AG04450 (cell line): ENCODE measurements at regions of chr9 and their contacts with region 1.

Region 1: DNA sequence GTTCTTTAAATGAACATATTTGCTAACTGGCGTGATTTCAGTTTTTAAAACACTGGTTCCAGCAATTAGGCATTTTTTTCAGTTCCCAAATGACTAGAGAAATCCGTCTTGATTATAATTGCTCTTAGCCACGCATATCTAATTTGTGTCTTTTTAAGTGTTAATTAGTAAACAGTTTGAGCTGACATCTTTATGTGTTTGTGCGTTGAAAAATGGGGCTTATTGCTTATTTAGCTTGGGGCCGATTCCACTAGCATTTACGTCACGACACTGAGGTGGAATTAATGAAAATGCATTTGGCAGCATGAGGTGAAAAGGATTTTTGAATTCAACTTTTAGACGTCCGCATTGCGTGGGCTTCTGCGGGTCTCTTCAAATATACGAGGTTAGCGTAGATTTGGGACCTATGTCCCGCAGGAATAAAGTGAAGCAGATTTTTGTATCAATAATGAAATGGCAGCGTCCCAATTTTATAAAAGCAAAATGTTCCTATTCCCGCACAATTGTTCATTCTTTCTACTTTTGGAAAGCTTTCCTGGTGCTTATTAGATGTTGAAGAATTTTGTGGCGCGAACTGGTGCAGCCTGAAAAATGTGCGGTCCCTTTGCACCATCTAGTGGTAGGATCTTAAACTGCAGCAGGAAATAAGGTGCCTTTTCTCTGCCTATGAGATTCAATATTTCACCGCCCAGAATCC is 122.7 kb upstream of the LMX1B start:
- DNase-seq: peak; percentile 33
- H3K4me3 ChIP-seq: no peak overlapping the region
- H3K27ac ChIP-seq: no peak overlapping the region
- H3K27me3 ChIP-seq: no peaks in the 10 kb centered on the region
- CTCF ChIP-seq: peak; percentile 96

Region 2: GRCh38 chr9:126301985-126302603 is 188.9 kb before region 1 on chr9:
- CTCF ChIA-PET with region 1: interaction called, 40 read pairs
- POLR2A ChIA-PET with region 1: no interaction called
- DNase-seq: peak; percentile 37
- H3K4me3 ChIP-seq: no peak overlapping the region
- H3K27ac ChIP-seq: no peak overlapping the region
- H3K27me3 ChIP-seq: peaks cover 27% of the 10 kb centered on the region
- CTCF ChIP-seq: peak; percentile 92

Region 3: GRCh38 chr9:126317513-126317912 is 173.5 kb before region 1 on chr9:
- CTCF ChIA-PET with region 1: interaction called, 33 read pairs
- POLR2A ChIA-PET with region 1: no interaction called
- DNase-seq: no peak
- H3K4me3 ChIP-seq: no peak overlapping the region
- H3K27ac ChIP-seq: no peak overlapping the region
- H3K27me3 ChIP-seq: peaks cover 4% of the 10 kb centered on the region
- CTCF ChIP-seq: peak; percentile 32; the same call in 1 of the 2 replicates

Region 4: GRCh38 chr9:126471084-126471624 is 19.9 kb before region 1 on chr9:
- CTCF ChIA-PET with region 1: interaction called, 18 read pairs
- POLR2A ChIA-PET with region 1: no interaction called
- DNase-seq: no peak
- H3K4me3 ChIP-seq: no peak overlapping the region
- H3K27ac ChIP-seq: no peak overlapping the region
- H3K27me3 ChIP-seq: no peaks in the 10 kb centered on the region
- CTCF ChIP-seq: no peak

Region 5: DNA sequence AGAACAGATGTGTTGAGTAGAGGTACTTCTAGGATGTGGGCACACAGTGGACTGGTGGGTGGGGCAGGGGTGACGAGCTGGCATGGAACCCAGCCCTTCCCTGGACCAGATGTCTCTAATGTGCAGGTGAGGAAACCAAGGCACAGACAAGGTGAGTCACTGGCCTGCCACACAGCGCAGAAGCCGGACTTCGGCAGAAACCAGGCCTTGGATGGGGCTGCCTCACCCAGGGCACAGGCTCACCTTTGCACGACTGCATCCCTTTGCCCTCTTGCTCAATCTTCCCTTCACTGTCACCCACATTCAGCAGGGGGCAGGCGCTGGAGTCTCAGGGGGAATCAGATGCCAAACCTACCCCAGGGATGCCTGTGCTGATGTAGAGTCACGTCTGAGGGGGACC is 57.3 kb after region 1 on chr9:
- CTCF ChIA-PET with region 1: no interaction called
- POLR2A ChIA-PET with region 1: no interaction called
- DNase-seq: no peak
- H3K4me3 ChIP-seq: no peak overlapping the region
- H3K27ac ChIP-seq: no peak overlapping the region
- H3K27me3 ChIP-seq: peaks cover 19% of the 10 kb centered on the region
- CTCF ChIP-seq: no peak